ENCODE measurements at regions of chr1 and their contacts with region 1.

Region 1: DNA sequence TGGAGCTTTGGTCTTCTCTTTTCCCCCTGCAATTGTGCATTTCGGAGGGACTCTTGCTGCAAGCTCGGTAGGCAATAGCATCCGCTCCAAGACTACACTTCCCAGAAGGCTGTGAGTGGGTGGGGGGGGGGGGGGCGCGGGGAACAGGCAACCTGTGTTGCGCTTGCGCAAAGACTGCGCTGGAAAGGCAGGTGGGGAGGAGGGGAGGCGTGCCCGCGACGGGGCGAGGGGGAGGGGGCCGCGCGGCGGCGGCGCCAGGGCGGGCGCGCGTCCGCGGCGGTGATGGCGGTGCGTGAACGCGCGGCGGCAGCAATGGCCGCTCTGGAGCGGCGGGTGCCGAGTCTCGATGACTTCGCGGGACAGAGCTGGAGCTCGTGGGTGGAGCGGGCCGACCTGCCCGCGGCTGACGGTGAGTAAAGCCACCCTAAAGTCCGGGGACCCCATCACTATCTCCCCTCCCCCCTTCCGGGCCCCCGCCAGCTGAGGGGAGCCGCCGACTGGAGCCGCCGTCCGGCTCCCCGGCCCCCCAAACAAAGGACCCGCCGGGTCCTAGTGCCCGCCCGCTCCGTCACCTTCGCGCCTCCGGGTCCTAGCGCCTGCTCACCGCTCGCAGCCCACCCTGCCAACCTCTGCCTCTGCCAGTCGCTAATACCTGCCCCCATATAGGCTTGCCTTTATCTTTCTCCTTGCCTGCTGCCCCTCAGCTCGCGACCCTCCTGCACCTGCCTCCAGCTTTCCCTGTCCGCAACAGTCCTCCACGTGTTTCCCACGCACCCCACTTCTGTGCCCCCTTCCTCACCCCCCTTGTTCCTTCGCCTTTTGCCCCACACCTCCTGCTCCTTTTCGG is at the start of gene ATXN7L2:
- DNase-seq: peak; percentile 90
- ATAC-seq: peak; percentile 81
- H3K4me3 Mint-ChIP-seq: peak within 1 kb of the TSS; percentile 91
- H3K27ac Mint-ChIP-seq: peak within 1 kb of the TSS; percentile 94
- H3K4me1 Mint-ChIP-seq: peaks cover 30% of the 10 kb centered on the region
- H3K27me3 Mint-ChIP-seq: peaks cover 1% of the 10 kb centered on the region
- CTCF ChIP-seq: no peak
- total RNA-seq, gene ATXN7L2: 11.2 to 13.7 TPM

Region 2: GRCh38 chr1:109225258-109226077 is 258.4 kb before region 1 on chr1:
- CTCF ChIA-PET with region 1: no interaction called
- POLR2A ChIA-PET with region 1: no interaction called
- intact Hi-C with region 1: no loop called
- DNase-seq: no peak
- ATAC-seq: no peak
- H3K4me3 Mint-ChIP-seq: no peak overlapping the region
- H3K27ac Mint-ChIP-seq: no peak overlapping the region
- H3K4me1 Mint-ChIP-seq: peaks cover 34% of the 10 kb centered on the region
- H3K27me3 Mint-ChIP-seq: no peaks in the 10 kb centered on the region
- CTCF ChIP-seq: no peak

Region 3: GRCh38 chr1:109426278-109427170 is 57.4 kb before region 1 on chr1 and contains the start of gene PSMA5:
- CTCF ChIA-PET with region 1: interaction called, 3 read pairs
- POLR2A ChIA-PET with region 1: interaction called, 25 read pairs
- intact Hi-C with region 1: loop called (anchors 2 kb)
- DNase-seq: peak; percentile 98
- ATAC-seq: peak; percentile 94
- H3K4me3 Mint-ChIP-seq: peak within 1 kb of the TSS; percentile 93
- H3K27ac Mint-ChIP-seq: peak within 1 kb of the TSS; percentile 96
- H3K4me1 Mint-ChIP-seq: peaks cover 28% of the 10 kb centered on the region
- H3K27me3 Mint-ChIP-seq: no peaks in the 10 kb centered on the region
- CTCF ChIP-seq: no peak
- total RNA-seq, gene PSMA5: 192 to 210 TPM

Region 4: DNA sequence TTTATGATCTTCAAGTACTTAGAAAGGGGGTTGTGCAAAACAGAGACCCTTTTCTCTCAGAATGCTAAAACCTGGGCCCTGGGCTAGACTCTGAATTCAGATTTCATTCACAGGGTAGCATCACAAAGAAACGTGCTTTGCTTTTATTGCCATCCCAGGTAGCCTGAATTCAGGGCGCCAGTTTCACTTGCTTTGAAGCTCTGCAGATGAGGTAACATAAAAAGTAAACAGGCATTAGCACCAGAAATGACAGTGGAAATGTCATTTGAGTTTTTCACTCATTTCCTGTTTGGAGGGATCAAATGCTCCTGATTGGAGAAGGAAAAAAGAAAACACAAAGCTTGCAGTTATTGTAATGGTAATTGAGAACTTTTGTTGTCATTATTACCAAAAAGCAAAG is 15.0 kb before region 1 on chr1:
- CTCF ChIA-PET with region 1: interaction called, 10 read pairs
- POLR2A ChIA-PET with region 1: interaction called, 6 read pairs
- intact Hi-C with region 1: no loop called
- DNase-seq: no peak
- ATAC-seq: no peak
- H3K4me3 Mint-ChIP-seq: no peak overlapping the region
- H3K27ac Mint-ChIP-seq: no peak overlapping the region
- H3K4me1 Mint-ChIP-seq: peaks cover 2% of the 10 kb centered on the region
- H3K27me3 Mint-ChIP-seq: peaks cover 57% of the 10 kb centered on the region
- CTCF ChIP-seq: no peak

Region 5: GRCh38 chr1:109493805-109494539 is 10.1 kb after region 1 on chr1 and contains the start of gene CYB561D1:
- CTCF ChIA-PET with region 1: interaction called, 152 read pairs
- POLR2A ChIA-PET with region 1: interaction called, 25 read pairs
- intact Hi-C with region 1: no loop called
- DNase-seq: peak; percentile 89
- ATAC-seq: peak; percentile 91
- H3K4me3 Mint-ChIP-seq: peak within 1 kb of the TSS; percentile 93
- H3K27ac Mint-ChIP-seq: peak within 1 kb of the TSS; percentile 73
- H3K4me1 Mint-ChIP-seq: peaks cover 45% of the 10 kb centered on the region
- H3K27me3 Mint-ChIP-seq: no peaks in the 10 kb centered on the region
- CTCF ChIP-seq: peak; percentile 88
- total RNA-seq, gene CYB561D1: 7.0 to 9.5 TPM

Region 6: DNA sequence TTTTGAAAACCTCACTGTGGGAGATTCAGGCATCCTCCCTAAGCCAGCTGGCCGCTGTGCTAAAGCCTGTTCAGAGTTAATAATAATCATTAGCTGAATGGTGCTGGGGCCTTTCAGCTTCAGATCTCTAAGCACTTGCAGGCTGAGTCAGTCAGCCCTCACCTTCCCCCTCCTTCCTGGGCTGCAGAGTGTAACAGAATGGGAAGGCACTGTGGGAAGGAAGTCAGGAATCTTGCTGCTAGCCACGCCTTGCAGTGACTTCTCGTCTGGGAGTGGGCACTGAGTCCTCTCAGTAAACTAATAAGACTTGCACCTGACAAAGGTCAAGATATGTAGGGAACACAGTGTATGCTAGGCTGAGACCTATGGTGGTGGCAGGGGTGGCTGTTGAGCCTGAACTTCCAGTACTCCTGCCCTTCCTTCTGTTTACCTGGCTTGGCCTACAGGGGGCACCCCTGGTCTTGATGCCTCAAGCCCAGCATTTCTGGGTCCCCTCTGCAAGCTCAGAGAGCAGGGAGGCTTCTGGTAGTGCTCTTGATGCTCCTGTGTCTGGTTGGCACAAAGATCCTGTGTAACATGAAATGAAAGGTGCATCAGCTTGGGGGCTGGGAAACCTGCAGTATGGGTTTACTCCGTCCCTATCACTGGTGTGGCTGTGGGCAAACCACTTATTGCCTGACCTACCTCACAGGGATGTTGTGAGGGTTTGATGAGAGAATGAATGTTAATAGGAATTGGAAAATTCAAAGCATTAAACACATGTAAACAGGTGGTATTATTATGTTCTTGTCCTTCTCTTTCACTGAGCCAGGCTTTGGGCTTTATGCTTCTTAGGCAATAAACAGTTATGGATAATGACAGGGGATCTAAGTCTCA is 16.0 kb after region 1 on chr1:
- CTCF ChIA-PET with region 1: interaction called, 152 read pairs
- POLR2A ChIA-PET with region 1: interaction called, 21 read pairs
- intact Hi-C with region 1: no loop called
- DNase-seq: peak; percentile 77
- ATAC-seq: peak; percentile 37
- H3K4me3 Mint-ChIP-seq: no peak overlapping the region
- H3K27ac Mint-ChIP-seq: peak overlapping the region; percentile 79
- H3K4me1 Mint-ChIP-seq: peaks cover 86% of the 10 kb centered on the region
- H3K27me3 Mint-ChIP-seq: no peaks in the 10 kb centered on the region
- CTCF ChIP-seq: peak; percentile 64

Region 7: DNA sequence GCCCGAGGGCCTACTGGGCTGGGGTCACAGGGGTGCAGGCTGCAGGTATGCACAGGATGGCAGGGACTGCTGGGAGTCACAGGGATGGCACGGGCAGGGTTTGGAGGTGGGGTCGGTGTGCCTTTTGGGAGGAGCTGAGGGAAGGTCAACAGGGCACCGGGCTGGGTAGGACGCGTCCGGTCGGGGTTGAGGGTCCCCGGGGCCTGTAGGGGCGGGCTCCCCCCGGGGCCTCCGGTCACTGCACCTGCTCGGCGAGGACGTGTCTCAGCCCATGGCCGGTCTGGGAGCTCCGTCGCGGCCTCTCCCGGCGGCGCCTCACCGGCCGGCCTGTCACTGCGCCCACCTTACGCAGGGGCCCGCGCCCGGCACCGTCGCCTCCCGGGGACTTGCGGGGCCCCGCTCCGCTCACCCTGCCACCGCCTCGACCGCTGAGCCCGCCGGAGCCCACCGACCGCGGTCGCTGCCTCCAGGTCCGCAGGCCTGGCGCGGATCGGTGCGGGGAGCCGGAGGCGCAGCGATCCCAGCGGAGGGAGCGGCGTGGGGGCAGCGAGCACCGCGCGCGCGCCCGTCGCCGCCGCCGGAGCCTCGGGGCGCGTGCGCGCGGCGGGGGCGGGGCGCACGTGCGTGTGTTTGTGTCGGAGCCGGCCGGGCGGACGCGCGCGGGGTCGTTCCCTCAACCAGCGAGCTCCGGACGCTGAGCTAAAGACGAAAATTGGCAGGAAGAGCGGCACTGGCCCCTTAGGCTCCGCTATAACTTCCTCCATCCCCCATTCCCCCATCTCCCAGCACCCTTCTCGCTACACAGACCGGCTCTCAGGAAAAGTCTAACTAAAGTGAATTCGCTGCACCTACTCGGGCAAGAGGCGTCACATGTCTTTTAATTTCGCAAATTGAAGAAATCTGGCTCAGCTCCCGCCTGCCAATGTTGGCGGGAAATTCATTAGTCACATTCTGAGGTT is 25.6 kb after region 1 on chr1 and contains the start of gene AMIGO1:
- CTCF ChIA-PET with region 1: interaction called, 152 read pairs
- POLR2A ChIA-PET with region 1: interaction called, 22 read pairs
- intact Hi-C with region 1: no loop called
- DNase-seq: peak; percentile 71
- ATAC-seq: peak; percentile 71
- H3K4me3 Mint-ChIP-seq: peak within 1 kb of the TSS; percentile 78
- H3K27ac Mint-ChIP-seq: peak within 1 kb of the TSS; percentile 84
- H3K4me1 Mint-ChIP-seq: peaks cover 53% of the 10 kb centered on the region
- H3K27me3 Mint-ChIP-seq: no peaks in the 10 kb centered on the region
- CTCF ChIP-seq: no peak
- total RNA-seq, gene AMIGO1: 1.3 to 1.7 TPM